GM12878 (cell line): ENCODE measurements at regions of chr14 and their contacts with region 1.

Region 1: DNA sequence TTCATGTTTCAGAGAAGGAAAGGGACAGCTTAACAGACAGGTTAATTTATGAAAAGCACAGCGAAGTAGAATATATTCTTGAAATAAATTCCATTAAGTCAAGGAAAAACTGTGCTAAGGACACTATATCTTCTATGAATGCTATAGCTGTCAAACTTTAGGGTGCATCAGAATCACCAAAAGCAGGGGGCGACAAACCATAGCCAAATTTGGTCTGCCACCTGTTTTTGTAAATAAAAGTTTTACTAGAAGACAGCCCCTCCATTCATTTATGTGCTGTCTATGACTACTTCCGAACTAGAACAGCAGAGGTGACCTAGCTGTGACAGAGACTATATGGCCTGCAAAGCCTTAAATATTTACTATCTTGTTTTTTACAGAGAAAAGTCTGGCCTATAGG is 25.9 kb downstream of the PPP4R3A start:
- DNase-seq: no peak
- ATAC-seq: peak; percentile 33
- H3K4me3 ChIP-seq: no peak overlapping the region
- H3K27ac ChIP-seq: no peak overlapping the region
- H3K4me1 ChIP-seq: 0 out of 2 replicates have a peak, but pooled peaks cover 8% of the 10 kb centered on the region
- H3K27me3 ChIP-seq: no peaks in the 10 kb centered on the region
- CTCF ChIP-seq: peak in 2 of 3 experiments; percentile 9 to 26; a peak in 1 of 6 replicates
- EP300 ChIP-seq: no peak
- POLR2A ChIP-seq: no peak
- RAD21 ChIP-seq: peak; percentile 16; the same call in 1 of the 2 replicates

Region 2: GRCh38 chr14:91470216-91470615 is 14.0 kb before region 1 on chr14:
- CTCF ChIA-PET with region 1: interaction called, 12 read pairs
- POLR2A ChIA-PET with region 1: interaction called, 3 read pairs
- RAD21 ChIA-PET with region 1: no interaction called
- SMC1A ChIA-PET with region 1: interaction called, 10 read pairs
- in situ Hi-C with region 1: no loop called
- intact Hi-C with region 1: no loop called
- DNase-seq: no peak
- ATAC-seq: peak; percentile 35
- H3K4me3 ChIP-seq: no peak overlapping the region
- H3K27ac ChIP-seq: no peak overlapping the region
- H3K4me1 ChIP-seq: no peaks in the 10 kb centered on the region
- H3K27me3 ChIP-seq: no peaks in the 10 kb centered on the region
- CTCF ChIP-seq: no peak
- EP300 ChIP-seq: no peak
- POLR2A ChIP-seq: no peak
- RAD21 ChIP-seq: no peak

Region 3: DNA sequence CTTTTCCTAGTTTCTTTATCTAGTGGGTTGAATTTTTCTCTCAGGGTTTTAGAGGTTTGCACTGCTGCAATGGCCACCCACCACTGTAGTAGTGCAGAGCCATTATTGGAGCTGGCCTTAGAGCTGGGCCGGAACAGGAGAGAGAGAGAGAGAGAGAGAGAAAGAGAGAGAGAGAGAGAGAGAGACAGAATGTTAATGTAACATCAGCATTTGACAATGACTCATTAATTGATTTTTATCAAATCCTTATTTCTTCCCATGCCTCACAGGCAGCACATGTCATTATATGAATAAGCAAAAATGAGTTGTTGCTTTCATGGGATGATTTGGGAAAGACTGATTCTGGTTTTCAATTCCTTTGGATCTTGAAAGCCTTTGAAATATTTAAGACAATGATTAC is 102.2 kb after region 1 on chr14:
- CTCF ChIA-PET with region 1: no interaction called
- POLR2A ChIA-PET with region 1: no interaction called
- RAD21 ChIA-PET with region 1: no interaction called
- SMC1A ChIA-PET with region 1: no interaction called
- in situ Hi-C with region 1: no loop called
- intact Hi-C with region 1: no loop called
- DNase-seq: no peak
- ATAC-seq: no peak
- H3K4me3 ChIP-seq: no peak overlapping the region
- H3K27ac ChIP-seq: no peak overlapping the region
- H3K4me1 ChIP-seq: no peaks in the 10 kb centered on the region
- H3K27me3 ChIP-seq: no peaks in the 10 kb centered on the region; a peak in 1 of 4 replicates
- CTCF ChIP-seq: no peak
- EP300 ChIP-seq: no peak
- POLR2A ChIP-seq: no peak
- RAD21 ChIP-seq: no peak